B cell (primary cell): ENCODE measurements at regions of chr5 and their contacts with region 1.

Region 1: GRCh38 chr5:40437452-40437861 is 242.3 kb upstream of the PTGER4 start:
- DNase-seq: peak; percentile 41
- ATAC-seq: peak; percentile 66
- H3K4me3 ChIP-seq: no peak overlapping the region
- H3K4me3 Mint-ChIP-seq: peak overlapping the region; percentile 46
- H3K27ac ChIP-seq: no peak overlapping the region
- H3K27ac Mint-ChIP-seq: peak overlapping the region; percentile 21
- H3K4me1 ChIP-seq: peaks cover 28 to 35% of the 10 kb centered on the region in 2 donors
- H3K4me1 Mint-ChIP-seq: peaks cover 40% of the 10 kb centered on the region
- H3K27me3 ChIP-seq: no peaks in the 10 kb centered on the region
- H3K27me3 Mint-ChIP-seq: no peaks in the 10 kb centered on the region
- CTCF ChIP-seq: no peak

Region 2: GRCh38 chr5:40374853-40375252 is 62.6 kb before region 1 on chr5:
- CTCF ChIA-PET with region 1: no interaction called
- POLR2A ChIA-PET with region 1: no interaction called
- intact Hi-C with region 1: loop called (anchors 5 kb)
- DNase-seq: no peak
- ATAC-seq: no peak
- H3K4me3 ChIP-seq: no peak overlapping the region
- H3K4me3 Mint-ChIP-seq: no peak overlapping the region
- H3K27ac ChIP-seq: no peak overlapping the region
- H3K27ac Mint-ChIP-seq: no peak overlapping the region
- H3K4me1 ChIP-seq: peaks cover 14 to 30% of the 10 kb centered on the region in 2 donors
- H3K4me1 Mint-ChIP-seq: peaks cover 28% of the 10 kb centered on the region
- H3K27me3 ChIP-seq: no peaks in the 10 kb centered on the region
- H3K27me3 Mint-ChIP-seq: no peaks in the 10 kb centered on the region
- CTCF ChIP-seq: no peak

Region 3: GRCh38 chr5:40410964-40411635 is 26.4 kb before region 1 on chr5:
- CTCF ChIA-PET with region 1: interaction called, 3 read pairs
- POLR2A ChIA-PET with region 1: no interaction called
- intact Hi-C with region 1: loop called (anchors 1 kb)
- DNase-seq: no peak
- ATAC-seq: no peak
- H3K4me3 ChIP-seq: no peak overlapping the region
- H3K4me3 Mint-ChIP-seq: peak overlapping the region; percentile 64
- H3K27ac ChIP-seq: peak overlapping the region in 1 of 2 donors; percentile 51
- H3K27ac Mint-ChIP-seq: no peak overlapping the region
- H3K4me1 ChIP-seq: peaks cover 33 to 34% of the 10 kb centered on the region in 2 donors
- H3K4me1 Mint-ChIP-seq: peaks cover 35% of the 10 kb centered on the region
- H3K27me3 ChIP-seq: no peaks in the 10 kb centered on the region
- H3K27me3 Mint-ChIP-seq: no peaks in the 10 kb centered on the region
- CTCF ChIP-seq: no peak

Region 4: GRCh38 chr5:40453689-40454088 is 16.2 kb after region 1 on chr5:
- CTCF ChIA-PET with region 1: no interaction called
- POLR2A ChIA-PET with region 1: no interaction called
- intact Hi-C with region 1: no loop called
- DNase-seq: no peak
- ATAC-seq: no peak
- H3K4me3 ChIP-seq: no peak overlapping the region
- H3K4me3 Mint-ChIP-seq: no peak overlapping the region
- H3K27ac ChIP-seq: no peak overlapping the region
- H3K27ac Mint-ChIP-seq: no peak overlapping the region
- H3K4me1 ChIP-seq: no peaks in the 10 kb centered on the region
- H3K4me1 Mint-ChIP-seq: no peaks in the 10 kb centered on the region
- H3K27me3 ChIP-seq: no peaks in the 10 kb centered on the region
- H3K27me3 Mint-ChIP-seq: no peaks in the 10 kb centered on the region
- CTCF ChIP-seq: no peak